ENCODE measurements at regions of chr17 and their contacts with region 1.

Region 1: DNA sequence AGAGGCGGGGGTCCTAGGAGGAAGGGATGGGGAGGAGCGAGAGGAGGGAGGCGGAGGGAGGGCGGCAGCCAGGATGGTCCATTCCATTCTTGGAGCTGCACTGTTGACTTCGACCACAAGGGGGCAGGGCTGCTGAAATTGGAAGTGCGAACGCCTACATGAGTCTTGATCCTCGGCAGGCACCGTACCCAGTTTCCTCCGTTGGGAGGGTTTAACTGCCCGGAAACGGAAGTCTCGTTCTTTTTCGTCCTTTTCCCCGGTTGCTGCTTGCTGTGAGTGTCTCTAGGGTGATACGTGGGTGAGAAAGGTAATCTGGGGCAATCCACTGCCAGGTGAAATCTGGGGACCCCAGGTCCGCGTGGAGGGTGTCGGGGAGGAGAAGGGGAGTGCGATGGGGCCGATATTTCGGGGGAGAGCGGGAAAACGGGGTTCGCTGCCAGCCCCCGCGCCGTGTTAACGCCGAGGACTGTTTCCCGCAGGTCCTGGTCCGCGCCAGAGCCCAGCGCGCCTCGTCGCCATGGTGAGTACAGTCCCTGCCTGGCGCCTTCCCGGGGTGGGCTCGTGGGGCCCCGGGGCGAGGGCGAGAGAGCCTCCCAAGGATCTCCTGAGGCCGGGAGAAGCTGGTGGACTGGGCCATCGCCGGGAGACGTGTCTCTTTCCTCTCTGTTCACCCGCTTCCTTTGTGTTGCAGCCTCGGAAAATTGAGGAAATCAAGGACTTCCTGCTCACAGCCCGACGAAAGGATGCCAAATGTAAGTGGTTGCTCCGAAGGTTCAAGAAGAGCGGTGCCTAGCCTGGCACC is at the start of gene RPL38:
- H3K4me3 ChIP-seq: peak within 1 kb of the TSS; percentile 96
- H3K27ac ChIP-seq: peak within 1 kb of the TSS; percentile 98
- H3K4me1 ChIP-seq: peaks cover 12% of the 10 kb centered on the region; the same call in 1 of the 2 replicates
- CTCF ChIP-seq: peak; percentile 99

Region 2: DNA sequence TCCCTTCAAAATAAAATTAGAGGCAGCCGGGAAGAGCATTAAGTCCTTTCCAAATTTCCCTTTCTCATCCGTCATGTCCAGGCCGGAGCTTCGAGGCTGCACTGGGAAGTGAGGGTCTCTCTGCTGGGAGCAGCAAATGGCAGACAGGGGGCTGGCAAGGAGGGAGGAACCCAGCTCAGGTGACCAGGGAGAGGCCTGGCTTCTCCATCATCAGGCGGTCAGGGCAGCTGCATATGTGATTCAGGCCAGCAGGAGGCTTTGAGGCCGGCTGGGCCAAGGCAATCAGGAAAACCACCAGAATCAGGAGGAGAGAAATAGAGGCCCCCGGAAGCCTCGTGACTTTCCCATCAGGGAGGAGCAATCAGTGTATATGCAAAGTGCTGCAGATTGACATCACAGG is 85.1 kb before region 1 on chr17:
- CTCF ChIA-PET with region 1: interaction called, 23 read pairs
- POLR2A ChIA-PET with region 1: interaction called, 4 read pairs
- H3K4me3 ChIP-seq: no peak overlapping the region
- H3K27ac ChIP-seq: no peak overlapping the region
- H3K4me1 ChIP-seq: no peaks in the 10 kb centered on the region
- CTCF ChIP-seq: no peak

Region 3: GRCh38 chr17:74163271-74163821 is 40.3 kb before region 1 on chr17:
- CTCF ChIA-PET with region 1: no interaction called
- POLR2A ChIA-PET with region 1: no interaction called
- H3K4me3 ChIP-seq: no peak overlapping the region
- H3K27ac ChIP-seq: no peak overlapping the region
- H3K4me1 ChIP-seq: no peaks in the 10 kb centered on the region
- CTCF ChIP-seq: no peak

Region 4: DNA sequence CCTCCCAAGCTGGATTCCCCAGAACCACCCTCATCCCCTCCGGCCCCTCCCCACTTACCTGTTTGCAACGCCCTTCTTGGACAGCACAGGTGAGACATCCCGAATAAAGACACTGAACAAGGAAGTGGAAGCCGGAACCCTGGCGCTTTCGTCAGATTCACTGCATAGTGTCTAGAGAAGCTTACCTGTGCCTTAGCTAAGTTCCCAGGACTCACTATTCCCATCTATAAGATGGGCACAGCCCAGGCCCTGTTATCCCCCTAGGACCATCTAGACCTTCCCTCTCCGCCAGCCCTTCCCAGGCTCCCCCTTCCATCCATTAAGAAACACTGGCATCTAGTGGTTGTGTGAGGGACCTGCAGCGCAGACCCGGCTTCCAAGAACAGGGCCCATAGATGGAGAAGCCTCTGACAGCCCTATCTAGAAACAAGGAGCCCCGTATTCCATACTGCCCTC is 27.1 kb before region 1 on chr17:
- CTCF ChIA-PET with region 1: interaction called, 24 read pairs
- POLR2A ChIA-PET with region 1: interaction called, 4 read pairs
- H3K4me3 ChIP-seq: no peak overlapping the region
- H3K27ac ChIP-seq: no peak overlapping the region
- H3K4me1 ChIP-seq: no peaks in the 10 kb centered on the region; the same call in 1 of the 2 replicates
- CTCF ChIP-seq: peak; percentile 74

Region 5: GRCh38 chr17:74182041-74182723 is 21.5 kb before region 1 on chr17:
- CTCF ChIA-PET with region 1: interaction called, 24 read pairs
- POLR2A ChIA-PET with region 1: no interaction called
- H3K4me3 ChIP-seq: no peak overlapping the region
- H3K27ac ChIP-seq: no peak overlapping the region
- H3K4me1 ChIP-seq: no peaks in the 10 kb centered on the region
- CTCF ChIP-seq: no peak

Region 6: GRCh38 chr17:74190172-74190571 is 13.5 kb before region 1 on chr17:
- CTCF ChIA-PET with region 1: interaction called, 42 read pairs
- POLR2A ChIA-PET with region 1: interaction called, 6 read pairs
- H3K4me3 ChIP-seq: no peak overlapping the region
- H3K27ac ChIP-seq: no peak overlapping the region
- H3K4me1 ChIP-seq: no peaks in the 10 kb centered on the region
- CTCF ChIP-seq: no peak

Measured in HEK293 (cell line).